CD8-positive, alpha-beta T cell (primary cell): ENCODE measurements at regions of chr1 and their contacts with region 1.

Region 1: DNA sequence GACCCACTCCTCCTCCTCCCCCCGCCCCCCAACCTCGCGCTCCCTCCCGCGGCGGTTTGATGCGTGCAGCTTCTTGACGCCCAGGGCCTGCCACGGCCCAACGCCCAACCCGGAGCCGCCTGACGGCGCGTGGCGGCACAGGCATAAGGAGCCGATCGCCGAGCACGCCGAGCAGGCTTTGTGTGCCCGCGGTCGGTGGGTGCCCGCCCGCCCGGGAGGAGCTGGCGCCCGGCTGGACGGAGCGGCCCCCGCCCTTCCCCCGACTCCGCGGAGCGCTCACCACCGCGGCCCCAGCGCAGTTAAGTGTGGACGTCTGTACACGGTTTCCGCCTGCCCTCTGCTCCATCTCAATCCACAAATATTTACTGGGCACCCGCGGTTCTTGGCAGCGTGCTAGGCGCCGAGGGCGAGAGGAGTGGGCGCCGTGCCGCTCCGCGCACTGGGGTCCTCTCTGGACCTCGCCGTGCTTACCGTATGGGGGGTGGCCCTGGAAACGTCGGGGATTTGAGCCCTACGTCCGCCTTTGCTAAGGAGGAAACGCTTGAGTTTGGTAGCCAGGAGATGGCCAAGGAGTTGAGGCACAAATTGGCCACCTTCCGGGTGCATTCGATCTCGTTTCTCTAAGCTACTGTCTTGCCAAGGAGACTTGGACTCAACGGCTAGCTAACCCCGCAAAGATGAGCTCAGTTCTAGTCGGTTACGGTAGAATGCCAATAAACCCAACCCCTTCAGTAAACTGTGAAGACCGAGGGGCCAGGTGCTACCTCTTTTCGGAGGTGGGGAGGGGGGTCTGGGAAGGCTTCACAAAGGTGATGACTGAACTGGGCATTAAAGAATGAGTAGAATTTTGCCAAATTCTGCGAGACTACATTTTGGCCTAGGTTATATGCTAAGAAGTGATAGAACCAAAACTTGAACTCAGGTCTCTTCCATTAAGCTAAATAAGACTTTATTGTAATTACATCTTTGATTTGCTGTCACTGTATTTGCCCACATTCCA is 583 bp upstream of the HDGF start:
- DNase-seq: peak; percentile 94 to 98 (median 97)
- ATAC-seq: peak; percentile 85
- H3K4me3 ChIP-seq: peak overlapping the region; percentile 89 to 92
- H3K4me3 Mint-ChIP-seq: peak overlapping the region; percentile 89
- H3K27ac ChIP-seq: peak overlapping the region; percentile 65 to 89
- H3K27ac Mint-ChIP-seq: peak overlapping the region; percentile 90
- H3K4me1 ChIP-seq: peaks cover 48% of the 10 kb centered on the region
- H3K4me1 Mint-ChIP-seq: peaks cover 57% of the 10 kb centered on the region
- H3K27me3 ChIP-seq: no peaks in the 10 kb centered on the region
- H3K27me3 Mint-ChIP-seq: no peaks in the 10 kb centered on the region
- CTCF ChIP-seq: no peak

Region 2: DNA sequence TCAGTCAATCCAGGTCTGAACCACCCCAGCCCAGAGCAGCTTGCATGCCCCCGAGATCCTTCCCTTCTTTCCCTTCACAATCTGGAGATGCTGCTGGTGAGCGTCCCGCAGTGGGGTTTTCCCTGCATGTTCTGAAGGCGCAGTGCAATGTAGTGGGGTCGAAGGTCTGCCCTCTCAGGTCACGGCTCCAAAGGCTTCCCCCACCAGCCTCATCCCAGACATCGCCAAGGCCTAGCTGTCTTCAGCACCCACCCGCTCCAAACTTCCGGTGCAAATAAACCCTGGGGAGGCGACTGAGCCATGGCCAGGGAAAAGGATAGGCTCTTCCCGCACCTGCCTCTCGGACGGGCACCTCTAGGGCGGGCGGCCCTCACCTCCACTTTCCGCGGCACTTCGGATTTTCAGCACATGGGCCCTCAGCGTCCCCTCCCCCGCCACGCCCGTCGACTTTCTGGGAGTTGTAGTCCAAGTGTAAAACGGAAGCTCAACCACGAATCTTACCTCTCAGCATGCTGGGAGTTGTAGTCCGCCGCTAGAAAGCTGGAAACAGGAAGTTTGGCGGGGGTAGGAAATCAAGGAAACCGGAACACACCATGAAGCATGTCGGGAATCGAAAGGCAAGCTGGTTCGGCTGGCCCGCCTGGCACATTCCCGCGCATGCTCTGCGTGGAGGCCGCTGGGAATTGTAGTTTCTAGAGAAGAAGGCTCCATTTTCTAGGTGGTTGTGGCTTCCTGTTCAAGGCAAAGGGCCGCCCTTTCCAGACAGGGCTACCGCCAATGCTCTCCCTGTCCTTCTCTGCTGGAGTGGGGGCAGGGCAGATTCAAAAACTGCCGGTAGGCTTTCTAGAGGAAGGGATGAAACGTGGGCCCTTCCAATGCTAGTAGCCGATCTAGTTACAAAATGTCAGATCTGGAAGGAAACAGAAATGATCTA is 11.1 kb before region 1 on chr1 and contains the start of gene MRPL24:
- CTCF ChIA-PET with region 1: interaction called, 9 read pairs
- POLR2A ChIA-PET with region 1: interaction called, 34 read pairs
- intact Hi-C with region 1: loop called (anchors 1 kb)
- DNase-seq: peak; percentile 88 to 100 (median 96)
- ATAC-seq: peak; percentile 88
- H3K4me3 ChIP-seq: peak within 1 kb of the TSS; percentile 60 to 68
- H3K4me3 Mint-ChIP-seq: peak within 1 kb of the TSS; percentile 97
- H3K27ac ChIP-seq: peak within 1 kb of the TSS; percentile 55 to 81
- H3K27ac Mint-ChIP-seq: peak within 1 kb of the TSS; percentile 98
- H3K4me1 ChIP-seq: peaks cover 13% of the 10 kb centered on the region
- H3K4me1 Mint-ChIP-seq: peaks cover 38% of the 10 kb centered on the region
- H3K27me3 ChIP-seq: no peaks in the 10 kb centered on the region
- H3K27me3 Mint-ChIP-seq: no peaks in the 10 kb centered on the region
- CTCF ChIP-seq: no peak
- total RNA-seq, gene MRPL24: 9.1 to 12.5 TPM

Region 3: GRCh38 chr1:156767101-156767878 is 15.2 kb after region 1 on chr1 and contains the start of gene PRCC:
- CTCF ChIA-PET with region 1: interaction called, 9 read pairs
- POLR2A ChIA-PET with region 1: interaction called, 30 read pairs
- intact Hi-C with region 1: loop called (anchors 1 kb)
- DNase-seq: peak; percentile 93 to 100 (median 97)
- ATAC-seq: peak; percentile 90
- H3K4me3 ChIP-seq: peak within 1 kb of the TSS; percentile 66 to 69
- H3K4me3 Mint-ChIP-seq: no peak within 1 kb of the TSS
- H3K27ac ChIP-seq: peak within 1 kb of the TSS; percentile 87 to 90
- H3K27ac Mint-ChIP-seq: no peak within 1 kb of the TSS
- H3K4me1 ChIP-seq: peaks cover 29% of the 10 kb centered on the region
- H3K4me1 Mint-ChIP-seq: peaks cover 41% of the 10 kb centered on the region
- H3K27me3 ChIP-seq: no peaks in the 10 kb centered on the region
- H3K27me3 Mint-ChIP-seq: no peaks in the 10 kb centered on the region
- CTCF ChIP-seq: no peak
- total RNA-seq, gene PRCC: 55.6 to 58.4 TPM

Region 4: GRCh38 chr1:157138220-157139051 is 386.4 kb after region 1 on chr1 and contains the start of gene ETV3:
- CTCF ChIA-PET with region 1: no interaction called
- POLR2A ChIA-PET with region 1: no interaction called
- intact Hi-C with region 1: loop called in 1 of 2 experiments (anchors 2 kb)
- DNase-seq: peak; percentile 73 to 96 (median 87)
- ATAC-seq: peak; percentile 77
- H3K4me3 ChIP-seq: peak within 1 kb of the TSS; percentile 85 to 93
- H3K4me3 Mint-ChIP-seq: peak within 1 kb of the TSS; percentile 94
- H3K27ac ChIP-seq: peak within 1 kb of the TSS; percentile 84 to 97
- H3K27ac Mint-ChIP-seq: peak within 1 kb of the TSS; percentile 95
- H3K4me1 ChIP-seq: peaks cover 52% of the 10 kb centered on the region
- H3K4me1 Mint-ChIP-seq: peaks cover 54% of the 10 kb centered on the region
- H3K27me3 ChIP-seq: no peaks in the 10 kb centered on the region
- H3K27me3 Mint-ChIP-seq: no peaks in the 10 kb centered on the region
- CTCF ChIP-seq: no peak
- total RNA-seq, gene ETV3: 88.9 to 94.0 TPM